Spleen (tissue), 13 donors: ENCODE measurements at regions of chr12 and their contacts with region 1.

Region 1: DNA sequence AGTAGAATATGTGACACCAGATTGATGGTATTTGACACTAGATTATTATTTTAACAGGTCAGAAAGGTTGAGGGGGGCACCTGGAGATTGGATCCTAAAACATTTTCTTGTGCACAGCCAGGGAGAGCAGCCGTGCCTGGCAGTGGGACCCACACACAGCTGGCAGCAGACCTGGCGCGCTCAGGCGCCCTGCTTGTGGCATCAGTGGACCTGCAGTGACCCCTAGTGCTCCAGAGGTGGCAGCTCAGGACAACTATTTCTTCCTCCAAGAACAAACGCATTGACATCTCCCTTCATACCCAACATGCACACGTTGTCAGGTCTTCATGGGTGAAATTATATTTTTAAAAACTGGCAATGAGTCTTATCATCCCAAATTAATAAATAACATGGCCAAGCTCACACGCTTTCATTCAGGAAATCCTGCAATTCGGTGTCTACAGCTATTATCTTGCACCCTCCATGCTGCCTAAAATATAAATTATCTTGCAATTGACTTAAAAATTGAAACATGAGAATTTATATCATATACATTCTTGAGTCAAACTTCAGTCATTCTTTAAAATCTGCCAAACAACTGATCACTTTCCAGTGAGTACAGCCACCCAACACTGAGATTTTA is 7.7 kb upstream of the TMEM132D start:
- DNase-seq: no peak
- H3K4me3 ChIP-seq: no peak overlapping the region
- H3K27ac ChIP-seq: no peak overlapping the region
- H3K4me1 ChIP-seq: no peaks in the 10 kb centered on the region
- H3K27me3 ChIP-seq: peaks cover 0 to 68% (median 0%) of the 10 kb centered on the region in 7 donors
- CTCF ChIP-seq: peak in 10 of 11 experiments; percentile 23 to 65 (median 54)
- POLR2A ChIP-seq: no peak

Region 2: GRCh38 chr12:128259556-128260070 is 1651.9 kb before region 1 on chr12:
- intact Hi-C with region 1: loop called (anchors 10 kb)
- DNase-seq: no peak
- H3K4me3 ChIP-seq: no peak overlapping the region
- H3K27ac ChIP-seq: no peak overlapping the region
- H3K4me1 ChIP-seq: no peaks in the 10 kb centered on the region
- H3K27me3 ChIP-seq: peaks cover 0 to 37% (median 2%) of the 10 kb centered on the region in 7 donors
- CTCF ChIP-seq: peak in 8 of 11 experiments; percentile 32 to 64 (median 46)
- POLR2A ChIP-seq: no peak

Region 3: DNA sequence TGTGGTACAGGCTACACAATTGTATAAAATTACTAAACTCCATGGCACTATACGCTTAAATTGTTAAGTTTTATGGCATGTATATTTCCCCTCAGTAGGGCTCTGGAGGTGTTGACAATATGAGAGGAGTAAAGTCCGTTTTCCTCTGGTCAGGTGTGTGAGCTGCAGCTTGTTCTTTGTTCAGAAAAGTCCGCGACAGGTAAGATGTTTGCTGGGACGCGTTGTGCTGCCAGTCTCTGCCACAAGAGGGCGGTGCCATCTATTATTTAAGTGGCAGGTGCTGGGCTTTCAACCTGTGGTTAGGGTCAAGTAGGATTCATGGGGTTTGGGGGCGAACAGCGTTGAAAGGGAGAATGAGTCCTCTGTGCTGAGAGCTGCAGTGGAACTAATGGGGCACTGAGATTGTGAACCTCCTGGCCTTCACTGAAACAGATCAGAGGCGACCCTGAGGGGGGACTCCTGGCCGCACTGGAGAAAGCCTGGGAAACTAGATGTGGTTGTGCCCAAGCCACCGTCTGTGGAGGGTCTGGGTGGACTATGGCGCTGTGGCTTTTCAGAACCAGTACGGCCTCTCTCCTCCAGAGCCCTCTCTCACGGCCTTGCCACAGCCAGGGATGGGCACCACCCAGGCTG is 1266.8 kb before region 1 on chr12:
- intact Hi-C with region 1: loop called (anchors 10 kb)
- DNase-seq: no peak
- H3K4me3 ChIP-seq: no peak overlapping the region
- H3K27ac ChIP-seq: no peak overlapping the region
- H3K4me1 ChIP-seq: no peaks in the 10 kb centered on the region
- H3K27me3 ChIP-seq: peaks cover 0 to 8% (median 0%) of the 10 kb centered on the region in 7 donors
- CTCF ChIP-seq: peak in 10 of 11 experiments; percentile 39 to 76 (median 68)
- POLR2A ChIP-seq: no peak

Region 4: DNA sequence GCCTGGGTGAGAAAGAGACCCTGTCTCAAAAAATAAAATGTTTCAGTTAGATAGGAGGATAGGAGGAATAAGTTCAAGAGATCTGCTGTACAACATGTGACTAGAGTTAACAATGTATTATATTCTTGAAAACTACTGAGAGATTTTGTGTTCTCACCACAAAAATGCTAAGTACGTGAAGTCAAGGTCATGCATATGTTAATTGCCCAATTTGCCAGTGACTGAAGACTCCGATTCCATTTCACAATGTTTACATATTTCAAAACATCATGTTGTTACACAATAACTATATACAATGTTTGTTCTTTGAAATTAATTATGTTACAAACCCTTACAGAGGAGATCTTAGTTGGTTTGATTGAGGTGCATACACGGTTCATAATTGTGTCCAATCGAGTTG is 1139.9 kb before region 1 on chr12:
- intact Hi-C with region 1: loop called (anchors 10 kb)
- DNase-seq: no peak
- H3K4me3 ChIP-seq: no peak overlapping the region
- H3K27ac ChIP-seq: no peak overlapping the region
- H3K4me1 ChIP-seq: no peaks in the 10 kb centered on the region
- H3K27me3 ChIP-seq: peaks cover 0 to 28% (median 5%) of the 10 kb centered on the region in 7 donors
- CTCF ChIP-seq: no peak
- POLR2A ChIP-seq: no peak

Region 5: DNA sequence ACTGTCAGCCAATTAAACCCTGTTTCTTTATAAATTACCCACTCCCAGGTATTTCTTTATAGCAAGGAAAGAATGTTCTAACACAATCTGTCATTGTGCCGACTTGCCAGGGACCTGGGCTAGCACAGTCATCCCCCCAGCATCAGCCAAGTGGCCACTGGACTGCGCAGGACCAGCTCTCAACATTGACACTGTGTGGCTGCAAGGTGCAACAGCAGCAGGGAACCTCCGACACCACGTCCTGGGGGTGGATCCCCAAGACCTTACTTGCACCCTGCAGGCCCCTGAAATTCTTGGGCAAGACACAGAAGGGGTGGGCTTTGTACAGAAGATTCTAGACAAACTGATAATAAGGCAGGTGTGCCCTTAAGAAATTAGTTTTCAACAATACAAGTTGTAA is 748.7 kb before region 1 on chr12:
- intact Hi-C with region 1: no loop called
- DNase-seq: no peak
- H3K4me3 ChIP-seq: no peak overlapping the region
- H3K27ac ChIP-seq: no peak overlapping the region
- H3K4me1 ChIP-seq: no peaks in the 10 kb centered on the region
- H3K27me3 ChIP-seq: peaks cover 0 to 10% (median 0%) of the 10 kb centered on the region in 7 donors
- CTCF ChIP-seq: no peak
- POLR2A ChIP-seq: no peak